Sigmoid colon (tissue), 7 donors: ENCODE measurements at regions of chr1 and their contacts with region 1.

Region 1: GRCh38 chr1:205631727-205632373 is at the start of gene ELK4:
- DNase-seq: peak; percentile 99
- H3K4me3 ChIP-seq: peak within 1 kb of the TSS; percentile 67 to 82 (median 72)
- H3K27ac ChIP-seq: peak within 1 kb of the TSS; percentile 93 to 99 (median 96)
- H3K4me1 ChIP-seq: peaks cover 0 to 31% (median 27%) of the 10 kb centered on the region in 4 donors
- H3K27me3 ChIP-seq: no peaks in the 10 kb centered on the region
- CTCF ChIP-seq: peak; percentile 50 to 75 (median 64)
- EP300 ChIP-seq: peak in 2 of 4 donors; percentile 24 to 30
- POLR2A ChIP-seq: peak; percentile 79 to 82
- total RNA-seq, gene ELK4: 18.6 to 21.0 (median 20.1) TPM

Region 2: DNA sequence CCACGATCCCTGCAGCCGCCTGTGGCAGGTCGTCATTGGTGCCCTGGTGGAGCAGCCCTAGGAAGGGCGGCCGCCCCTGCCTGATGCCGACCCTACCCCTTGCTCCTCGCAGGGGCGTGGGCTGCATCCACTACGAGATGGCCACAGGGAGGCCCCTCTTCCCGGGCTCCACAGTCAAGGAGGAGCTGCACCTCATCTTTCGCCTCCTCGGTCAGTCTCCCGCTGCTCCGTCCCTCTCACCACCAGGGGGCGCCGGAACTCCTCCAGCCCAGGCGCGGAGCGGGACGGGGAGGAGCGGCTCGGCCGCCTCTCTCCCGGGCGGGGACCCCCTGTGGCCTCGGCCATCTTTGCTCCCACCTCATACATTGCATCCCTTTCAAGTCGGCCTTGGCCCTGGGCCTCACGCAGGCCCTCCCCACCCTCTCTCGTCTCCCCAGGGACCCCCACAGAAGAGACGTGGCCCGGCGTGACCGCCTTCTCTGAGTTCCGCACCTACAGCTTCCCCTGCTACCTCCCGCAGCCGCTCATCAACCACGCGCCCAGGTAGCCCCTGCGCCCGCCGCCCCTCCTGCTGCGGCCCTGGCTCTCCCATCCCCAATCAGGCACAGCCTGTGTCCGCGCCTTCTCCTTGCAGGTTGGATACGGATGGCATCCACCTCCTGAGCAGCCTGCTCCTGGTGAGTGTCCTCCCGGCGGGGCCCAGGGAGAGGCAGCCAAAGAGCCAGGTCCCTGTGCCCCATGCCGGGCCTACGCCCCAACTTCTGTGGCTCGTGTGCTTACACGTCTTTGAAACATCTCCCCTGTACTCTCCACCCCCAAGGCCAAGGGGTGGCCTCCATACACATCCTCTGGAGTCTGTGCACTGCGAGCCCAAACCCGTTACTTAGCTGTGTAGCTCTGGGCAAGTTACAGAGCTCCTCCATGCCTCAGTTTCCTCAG is 102.7 kb before region 1 on chr1:
- intact Hi-C with region 1: loop called (anchors 10 kb)
- DNase-seq: peak; percentile 89
- H3K4me3 ChIP-seq: peak overlapping the region in 3 of 4 donors; percentile 20 to 45 (median 41)
- H3K27ac ChIP-seq: peak overlapping the region in 1 of 4 donors; percentile 21
- H3K4me1 ChIP-seq: peaks cover 0 to 12% (median 9%) of the 10 kb centered on the region in 4 donors
- H3K27me3 ChIP-seq: no peaks in the 10 kb centered on the region
- CTCF ChIP-seq: peak; percentile 61 to 97 (median 82)
- EP300 ChIP-seq: no peak
- POLR2A ChIP-seq: no peak

Region 3: DNA sequence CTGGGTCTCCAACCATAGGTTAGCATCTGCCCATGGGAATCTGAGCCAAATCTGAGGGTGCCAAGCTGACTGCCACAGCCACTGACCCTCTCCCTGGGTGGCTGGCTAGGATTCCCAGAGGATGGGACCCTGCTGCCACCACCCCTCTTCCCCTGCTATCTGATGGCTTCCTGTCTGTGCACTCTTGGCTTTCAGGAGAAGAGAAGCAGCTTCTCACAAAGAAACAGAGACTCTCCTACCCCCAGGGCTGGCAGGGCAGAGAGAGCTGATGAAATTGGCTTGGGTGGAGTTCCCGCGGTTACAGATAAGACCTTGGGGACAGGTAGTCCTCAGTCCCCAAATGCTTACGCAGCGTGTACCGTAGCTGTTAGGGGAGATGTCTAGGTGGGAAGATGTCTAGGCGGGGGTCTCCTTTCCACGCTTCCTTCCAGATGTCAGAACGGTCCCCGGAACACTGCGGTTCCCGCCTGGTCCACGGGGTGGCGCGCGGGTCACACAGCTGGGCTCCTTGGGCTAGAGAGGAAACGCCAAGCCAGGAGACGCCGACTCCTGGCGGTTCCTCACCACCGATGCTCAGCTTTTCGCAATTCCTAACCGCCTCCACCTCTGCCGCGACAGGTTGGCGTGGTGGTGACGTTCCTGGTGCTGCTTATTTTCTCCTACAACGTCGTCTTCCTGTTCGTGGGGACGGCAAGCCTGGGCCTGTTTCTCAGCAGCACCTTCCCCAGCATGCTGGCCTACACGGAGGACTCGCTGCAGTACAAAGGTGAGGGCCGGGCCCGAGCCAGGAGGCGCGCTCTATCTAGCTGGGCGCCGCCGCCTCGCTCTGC is 40.1 kb before region 1 on chr1:
- intact Hi-C with region 1: loop called (anchors 1 kb)
- DNase-seq: peak; percentile 92
- H3K4me3 ChIP-seq: peak overlapping the region; percentile 15 to 50 (median 42)
- H3K27ac ChIP-seq: peak overlapping the region in 1 of 4 donors; percentile 28
- H3K4me1 ChIP-seq: peaks cover 0 to 11% (median 3%) of the 10 kb centered on the region in 4 donors
- H3K27me3 ChIP-seq: no peaks in the 10 kb centered on the region
- CTCF ChIP-seq: peak; percentile 99
- EP300 ChIP-seq: no peak
- POLR2A ChIP-seq: no peak

Region 4: DNA sequence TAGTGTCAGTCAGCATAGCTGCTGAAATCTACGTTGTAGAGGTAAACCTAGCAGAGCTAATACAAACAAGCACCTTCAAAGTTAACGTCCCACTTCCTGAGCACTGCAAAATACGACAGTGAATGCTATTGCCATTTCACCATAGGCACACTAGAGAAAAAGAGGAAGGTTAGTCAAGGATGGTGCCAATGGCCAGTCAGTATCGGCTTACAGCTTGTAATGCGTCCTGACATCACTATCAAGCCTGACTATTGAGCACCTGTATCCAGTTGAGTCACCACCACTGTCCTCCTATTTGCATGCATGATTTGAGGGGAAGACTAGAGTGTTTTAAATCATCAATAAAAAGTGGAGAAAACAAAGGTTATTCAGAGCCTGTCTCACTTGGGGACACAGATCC is 83.8 kb after region 1 on chr1:
- intact Hi-C with region 1: no loop called
- DNase-seq: no peak
- H3K4me3 ChIP-seq: no peak overlapping the region
- H3K27ac ChIP-seq: no peak overlapping the region
- H3K4me1 ChIP-seq: peaks cover 0 to 15% (median 7%) of the 10 kb centered on the region in 4 donors
- H3K27me3 ChIP-seq: no peaks in the 10 kb centered on the region
- CTCF ChIP-seq: no peak
- EP300 ChIP-seq: no peak
- POLR2A ChIP-seq: no peak

Region 5: DNA sequence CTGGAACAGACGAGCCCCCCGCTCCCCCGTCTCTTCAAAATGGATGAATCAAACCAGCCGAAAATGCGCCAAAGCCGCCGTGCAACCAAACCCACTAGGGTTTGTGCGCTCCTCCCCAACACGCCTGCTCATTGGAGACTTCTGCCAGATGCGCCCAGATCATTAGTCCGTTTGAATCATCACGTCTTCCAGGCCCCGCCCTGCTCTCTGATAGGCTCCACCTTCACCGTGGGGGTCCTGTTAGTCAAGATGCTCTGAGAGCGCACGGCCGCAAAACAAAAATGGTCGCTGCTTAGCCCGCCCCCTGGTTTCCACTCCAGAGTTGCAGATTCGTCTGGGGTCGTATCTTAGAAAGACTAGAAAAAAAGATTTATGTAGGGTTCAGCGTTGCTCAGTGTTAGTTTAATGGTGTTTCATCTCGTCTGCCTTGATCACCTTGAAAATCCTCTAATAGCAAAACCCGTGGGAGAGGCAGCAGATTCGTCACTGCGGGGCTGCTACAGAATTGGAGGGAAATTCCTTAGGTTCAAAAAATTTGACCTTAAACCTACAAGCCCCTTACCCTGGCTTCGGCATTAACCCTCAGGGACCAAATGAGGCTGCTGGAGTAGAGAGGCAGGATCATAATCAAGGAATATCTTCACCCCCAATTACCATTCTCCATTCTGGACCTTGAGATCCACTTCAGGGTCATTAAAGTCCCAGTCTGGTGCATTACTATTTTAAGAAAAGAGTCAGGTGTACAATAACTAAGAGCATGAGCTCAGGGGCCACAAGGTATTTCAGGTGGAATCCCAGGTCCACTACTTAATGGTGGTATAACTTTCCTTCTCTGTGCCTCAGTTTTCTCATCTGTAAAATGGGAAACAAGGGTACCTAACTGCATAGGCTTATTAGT is 118.5 kb after region 1 on chr1 and contains the start of gene NUCKS1:
- intact Hi-C with region 1: loop called (anchors 5 kb)
- DNase-seq: peak; percentile 100
- H3K4me3 ChIP-seq: peak within 1 kb of the TSS; percentile 75 to 98 (median 91)
- H3K27ac ChIP-seq: peak within 1 kb of the TSS; percentile 99 to 100 (median 99)
- H3K4me1 ChIP-seq: peaks cover 0 to 36% (median 26%) of the 10 kb centered on the region in 4 donors
- H3K27me3 ChIP-seq: no peaks in the 10 kb centered on the region
- CTCF ChIP-seq: peak in 1 of 4 experiments; percentile 18
- EP300 ChIP-seq: no peak
- POLR2A ChIP-seq: peak; percentile 47 to 56
- total RNA-seq, gene NUCKS1: 88.9 to 112 (median 98.5) TPM